Dendritic cell treated with granulocyte-macrophage colony-stimulating factor and Interleukin-4, amounts not matched to agents 40 ng/mL and 50 ng/mL, for 4 days (primary cell): ENCODE measurements at regions of chr15 and their contacts with region 1.

Region 1: DNA sequence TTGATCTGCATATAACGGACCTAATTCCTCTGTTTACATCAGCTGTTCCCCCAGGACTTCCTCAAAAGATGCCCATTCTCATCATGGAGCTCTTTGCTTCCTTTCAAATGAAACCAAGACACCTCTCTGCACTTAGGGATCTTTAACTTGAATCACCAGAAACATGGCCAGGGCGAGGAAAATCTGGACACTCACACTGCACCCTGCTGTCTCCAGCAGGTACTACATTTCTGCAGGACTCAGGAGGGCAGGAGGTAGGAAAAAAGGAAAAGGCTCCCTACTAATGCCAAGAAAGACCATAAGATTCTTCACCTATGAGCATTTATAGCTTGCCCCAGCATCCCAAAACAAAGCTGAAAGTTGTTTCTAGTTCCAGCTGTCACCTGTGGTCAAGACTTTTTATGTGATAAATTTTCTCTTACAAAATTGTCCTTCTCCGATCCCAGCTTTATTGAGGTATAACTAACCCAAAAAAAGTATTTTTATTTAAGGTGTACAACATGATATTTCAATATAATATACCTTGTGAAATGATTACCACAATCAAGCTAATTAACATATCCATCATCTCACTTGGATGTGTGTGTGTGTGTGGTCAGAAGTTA is 87.3 kb upstream of the C15orf61 start:
- H3K4me3 Mint-ChIP-seq: no peak overlapping the region
- H3K27ac Mint-ChIP-seq: no peak overlapping the region
- H3K4me1 Mint-ChIP-seq: no peaks in the 10 kb centered on the region
- H3K27me3 Mint-ChIP-seq: no peaks in the 10 kb centered on the region

Region 2: DNA sequence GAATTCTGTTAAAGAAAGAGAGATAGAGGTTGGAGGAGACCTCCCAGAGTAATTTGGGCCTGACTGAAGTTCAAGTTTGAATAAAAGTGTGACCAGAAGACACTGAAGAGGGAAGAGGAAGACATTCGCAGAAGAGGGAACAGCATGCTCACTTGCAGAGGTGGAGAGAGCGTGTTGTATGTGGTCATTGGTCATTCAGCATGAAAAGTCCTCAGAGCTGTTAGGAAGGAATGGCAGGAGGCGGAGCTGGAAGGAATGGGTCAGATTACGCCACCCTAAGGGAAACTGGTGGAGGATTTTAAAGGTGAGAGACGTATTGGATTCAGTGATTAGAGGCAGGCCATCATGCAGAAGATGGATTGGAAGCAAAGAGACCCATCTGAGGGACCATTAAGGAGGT is 137.4 kb before region 1 on chr15:
- intact Hi-C with region 1: loop called (anchors 10 kb)
- H3K4me3 Mint-ChIP-seq: no peak overlapping the region
- H3K27ac Mint-ChIP-seq: no peak overlapping the region
- H3K4me1 Mint-ChIP-seq: peaks cover 6% of the 10 kb centered on the region
- H3K27me3 Mint-ChIP-seq: no peaks in the 10 kb centered on the region

Region 3: DNA sequence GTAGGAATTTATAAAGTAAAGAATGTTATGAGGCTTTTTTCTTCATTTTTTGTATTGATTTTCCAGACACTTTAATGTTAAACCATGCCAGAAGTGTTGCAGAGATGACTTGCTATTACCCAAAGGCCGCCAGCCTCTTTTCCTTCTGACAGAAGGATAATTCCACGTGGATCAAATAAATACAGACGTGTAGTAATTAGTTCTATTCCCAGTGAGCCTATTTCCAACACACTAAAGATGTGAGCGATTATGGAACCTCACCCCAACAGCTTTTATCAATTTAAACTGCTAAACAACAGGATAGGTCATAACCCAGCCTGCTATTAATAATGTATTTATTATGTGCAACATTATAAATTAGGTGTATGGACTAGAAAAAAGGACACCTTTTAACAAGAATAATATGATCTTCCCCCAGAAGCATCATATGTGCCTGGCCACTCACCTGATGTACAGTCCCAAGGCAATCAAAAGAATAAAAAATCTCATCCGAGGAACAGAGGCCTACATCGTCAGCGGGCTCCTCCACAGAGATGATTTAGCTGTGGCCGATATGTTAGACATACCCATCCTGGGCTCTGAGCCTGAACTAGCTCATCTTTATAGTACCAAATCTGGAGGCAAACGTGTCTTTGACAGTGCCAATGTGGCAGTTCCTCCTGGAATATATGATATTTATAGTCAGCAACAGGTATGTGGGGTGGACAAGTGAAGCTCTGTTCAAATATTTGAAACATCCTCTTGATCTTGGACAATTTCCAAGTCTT is 38.5 kb before region 1 on chr15:
- intact Hi-C with region 1: loop called (anchors 5 kb)
- H3K4me3 Mint-ChIP-seq: no peak overlapping the region
- H3K27ac Mint-ChIP-seq: no peak overlapping the region
- H3K4me1 Mint-ChIP-seq: peaks cover 10% of the 10 kb centered on the region
- H3K27me3 Mint-ChIP-seq: peaks cover 3% of the 10 kb centered on the region